Activated CD8-positive, alpha-beta T cell treated with anti-CD3 and anti-CD28 coated beads for 36 hours (primary cell): ENCODE measurements at regions of chr1 and their contacts with region 1.

Region 1: DNA sequence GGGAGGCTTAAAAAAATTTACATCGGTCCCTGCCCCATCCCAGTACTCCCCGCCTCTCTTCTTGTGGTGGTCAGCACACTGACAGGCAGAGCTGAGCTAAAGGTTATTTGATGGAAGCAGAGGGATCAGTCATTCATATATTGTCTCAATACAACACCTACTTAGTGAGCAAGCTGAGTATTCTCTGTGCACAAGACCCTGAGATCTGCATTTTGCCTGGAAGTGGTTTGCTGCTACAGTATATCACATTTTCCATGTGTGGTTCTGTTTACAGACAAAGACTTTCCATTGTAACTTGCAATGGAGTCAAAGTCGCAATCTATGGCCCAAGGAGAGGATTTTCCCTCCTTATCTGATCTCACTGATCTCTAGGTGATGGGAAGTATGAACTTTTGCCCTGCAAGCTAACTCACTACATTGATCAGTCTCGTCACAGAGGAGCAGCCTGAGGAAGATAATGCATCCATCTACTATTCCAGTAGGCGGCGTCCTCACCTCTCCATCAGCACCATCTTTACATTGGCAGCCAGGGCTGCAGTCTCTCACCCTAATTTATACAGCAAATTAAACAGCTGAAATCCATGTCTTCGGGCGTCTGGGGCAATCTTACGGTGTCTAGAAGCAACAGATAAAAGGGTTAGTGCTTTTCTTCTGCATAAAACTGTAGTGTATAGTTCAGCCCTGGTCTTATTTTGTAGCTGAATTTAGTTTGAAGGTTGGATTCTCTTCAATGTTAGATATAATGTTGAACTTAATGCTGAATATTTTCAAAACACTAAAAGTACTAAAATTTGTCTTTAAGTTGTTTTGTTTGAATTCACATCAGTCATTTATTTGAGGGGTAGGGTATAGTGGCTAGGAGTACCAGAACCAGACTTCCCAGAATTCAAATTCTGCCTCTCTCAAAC is 3.2 kb upstream of the TRAF5 start:
- DNase-seq: peak; percentile 86
- ATAC-seq: peak; percentile 77
- H3K4me3 Mint-ChIP-seq: no peak overlapping the region
- H3K27ac Mint-ChIP-seq: peak overlapping the region; percentile 58
- H3K4me1 Mint-ChIP-seq: peaks cover 61% of the 10 kb centered on the region
- H3K27me3 Mint-ChIP-seq: no peaks in the 10 kb centered on the region
- CTCF ChIP-seq: peak; percentile 81

Region 2: GRCh38 chr1:211258756-211259637 is 64.4 kb before region 1 on chr1 and contains the start of gene RCOR3:
- CTCF ChIA-PET with region 1: interaction called, 12 read pairs
- POLR2A ChIA-PET with region 1: interaction called, 7 read pairs
- intact Hi-C with region 1: no loop called
- DNase-seq: peak; percentile 94
- ATAC-seq: peak; percentile 83
- H3K4me3 Mint-ChIP-seq: peak within 1 kb of the TSS; percentile 86
- H3K27ac Mint-ChIP-seq: peak within 1 kb of the TSS; percentile 95
- H3K4me1 Mint-ChIP-seq: peaks cover 17% of the 10 kb centered on the region
- H3K27me3 Mint-ChIP-seq: no peaks in the 10 kb centered on the region
- CTCF ChIP-seq: peak; percentile 66
- total RNA-seq, gene RCOR3: 25.7 to 30.7 TPM

Region 3: DNA sequence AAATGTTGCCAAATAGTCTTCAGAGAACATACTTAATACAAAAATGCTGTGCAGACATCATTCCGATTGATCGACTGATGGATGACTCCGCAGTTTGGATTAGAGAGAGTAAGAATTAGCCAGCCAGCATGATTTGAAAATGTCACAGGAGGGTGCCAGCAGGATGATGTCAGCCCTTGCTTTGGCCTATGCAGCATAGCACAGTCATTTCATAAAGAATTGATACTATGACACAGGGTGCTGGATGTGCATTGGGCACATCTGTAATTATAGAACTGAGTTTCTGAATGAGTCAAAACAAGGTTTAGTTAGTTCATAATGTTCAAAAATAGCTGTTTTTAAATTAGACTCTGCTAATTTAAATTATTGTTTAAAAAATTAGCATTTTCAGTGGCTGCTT is 18.4 kb before region 1 on chr1:
- CTCF ChIA-PET with region 1: interaction called, 11 read pairs
- POLR2A ChIA-PET with region 1: interaction called, 3 read pairs
- intact Hi-C with region 1: loop called (anchors 2 kb)
- DNase-seq: peak; percentile 78
- ATAC-seq: peak; percentile 100
- H3K4me3 Mint-ChIP-seq: no peak overlapping the region
- H3K27ac Mint-ChIP-seq: peak overlapping the region; percentile 69
- H3K4me1 Mint-ChIP-seq: peaks cover 38% of the 10 kb centered on the region
- H3K27me3 Mint-ChIP-seq: no peaks in the 10 kb centered on the region
- CTCF ChIP-seq: no peak

Region 4: DNA sequence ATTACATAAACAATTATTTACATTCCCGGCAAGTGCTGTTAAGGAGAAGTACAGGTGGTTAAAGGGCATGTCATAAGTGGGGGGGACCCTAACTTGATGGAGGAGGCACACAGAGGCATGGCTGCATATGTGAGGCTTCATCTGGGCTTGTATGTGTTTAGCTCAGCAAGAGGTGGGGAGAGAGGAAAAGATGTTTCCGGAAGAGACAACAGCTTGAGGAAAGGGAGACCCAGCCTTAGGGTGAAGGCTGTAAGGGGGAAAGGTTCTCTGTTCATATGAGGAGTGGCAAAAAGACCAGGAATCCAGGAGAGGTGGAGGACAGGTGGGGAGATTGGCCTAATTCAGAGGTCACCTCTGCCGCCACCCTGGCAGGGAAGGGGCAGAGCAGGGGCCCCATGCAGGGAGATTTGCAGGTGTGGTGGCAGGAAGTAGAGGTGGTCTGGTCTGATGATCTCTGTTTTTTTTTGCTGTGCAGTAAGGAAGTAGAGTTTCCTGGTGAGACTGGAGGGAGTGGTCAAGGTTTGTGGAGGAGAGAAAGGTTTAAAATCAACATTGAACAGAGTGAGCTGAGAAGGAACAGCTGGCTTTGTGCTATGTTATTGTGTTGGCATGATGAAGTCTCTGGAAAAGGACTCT is 12.2 kb after region 1 on chr1:
- CTCF ChIA-PET with region 1: interaction called, 26 read pairs
- POLR2A ChIA-PET with region 1: interaction called, 45 read pairs
- intact Hi-C with region 1: no loop called
- DNase-seq: peak; percentile 43
- ATAC-seq: peak; percentile 60
- H3K4me3 Mint-ChIP-seq: peak overlapping the region; percentile 46
- H3K27ac Mint-ChIP-seq: peak overlapping the region; percentile 88
- H3K4me1 Mint-ChIP-seq: peaks cover 87% of the 10 kb centered on the region
- H3K27me3 Mint-ChIP-seq: no peaks in the 10 kb centered on the region
- CTCF ChIP-seq: no peak

Region 5: GRCh38 chr1:211382714-211383480 is 59.5 kb after region 1 on chr1:
- CTCF ChIA-PET with region 1: interaction called, 8 read pairs
- POLR2A ChIA-PET with region 1: no interaction called
- intact Hi-C with region 1: loop called (anchors 5 kb)
- DNase-seq: peak; percentile 85
- ATAC-seq: peak; percentile 81
- H3K4me3 Mint-ChIP-seq: peak overlapping the region; percentile 82
- H3K27ac Mint-ChIP-seq: peak overlapping the region; percentile 93
- H3K4me1 Mint-ChIP-seq: peaks cover 41% of the 10 kb centered on the region
- H3K27me3 Mint-ChIP-seq: no peaks in the 10 kb centered on the region
- CTCF ChIP-seq: no peak

Region 6: DNA sequence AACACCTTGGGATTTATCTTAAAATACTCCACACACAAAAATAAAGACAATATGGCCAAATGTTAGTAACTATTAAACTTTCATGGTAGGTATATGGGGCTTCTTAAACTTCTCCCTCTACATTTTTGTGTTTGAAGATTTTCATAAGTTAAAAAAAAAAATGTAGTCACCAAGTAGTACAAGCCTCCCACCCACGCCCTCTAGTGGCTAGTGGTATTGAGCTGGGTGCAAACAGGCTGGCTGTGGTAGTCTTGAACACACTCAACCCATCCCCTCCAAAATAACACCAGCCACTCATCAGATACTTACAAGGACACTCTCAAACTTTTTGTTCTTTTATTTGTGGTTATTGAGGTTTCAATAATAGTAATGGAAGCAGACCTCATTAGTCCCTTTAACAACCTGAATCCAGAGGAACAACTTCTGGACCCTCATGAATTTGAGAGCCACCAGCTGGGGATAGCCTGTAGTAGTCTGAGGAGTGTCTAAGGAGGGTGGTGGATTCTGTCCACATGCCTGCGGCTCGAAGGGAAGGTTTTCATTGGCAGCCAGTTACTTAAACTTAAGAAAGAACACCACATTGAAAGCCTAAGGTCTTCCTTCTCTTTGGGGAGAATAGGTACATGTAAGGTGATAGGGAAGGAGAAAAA is 152.9 kb after region 1 on chr1:
- CTCF ChIA-PET with region 1: interaction called, 25 read pairs
- POLR2A ChIA-PET with region 1: interaction called, 4 read pairs
- intact Hi-C with region 1: loop called (anchors 1 kb)
- DNase-seq: peak; percentile 90
- ATAC-seq: peak; percentile 87
- H3K4me3 Mint-ChIP-seq: no peak overlapping the region
- H3K27ac Mint-ChIP-seq: no peak overlapping the region
- H3K4me1 Mint-ChIP-seq: no peaks in the 10 kb centered on the region
- H3K27me3 Mint-ChIP-seq: peaks cover 15% of the 10 kb centered on the region
- CTCF ChIP-seq: peak; percentile 79

Region 7: DNA sequence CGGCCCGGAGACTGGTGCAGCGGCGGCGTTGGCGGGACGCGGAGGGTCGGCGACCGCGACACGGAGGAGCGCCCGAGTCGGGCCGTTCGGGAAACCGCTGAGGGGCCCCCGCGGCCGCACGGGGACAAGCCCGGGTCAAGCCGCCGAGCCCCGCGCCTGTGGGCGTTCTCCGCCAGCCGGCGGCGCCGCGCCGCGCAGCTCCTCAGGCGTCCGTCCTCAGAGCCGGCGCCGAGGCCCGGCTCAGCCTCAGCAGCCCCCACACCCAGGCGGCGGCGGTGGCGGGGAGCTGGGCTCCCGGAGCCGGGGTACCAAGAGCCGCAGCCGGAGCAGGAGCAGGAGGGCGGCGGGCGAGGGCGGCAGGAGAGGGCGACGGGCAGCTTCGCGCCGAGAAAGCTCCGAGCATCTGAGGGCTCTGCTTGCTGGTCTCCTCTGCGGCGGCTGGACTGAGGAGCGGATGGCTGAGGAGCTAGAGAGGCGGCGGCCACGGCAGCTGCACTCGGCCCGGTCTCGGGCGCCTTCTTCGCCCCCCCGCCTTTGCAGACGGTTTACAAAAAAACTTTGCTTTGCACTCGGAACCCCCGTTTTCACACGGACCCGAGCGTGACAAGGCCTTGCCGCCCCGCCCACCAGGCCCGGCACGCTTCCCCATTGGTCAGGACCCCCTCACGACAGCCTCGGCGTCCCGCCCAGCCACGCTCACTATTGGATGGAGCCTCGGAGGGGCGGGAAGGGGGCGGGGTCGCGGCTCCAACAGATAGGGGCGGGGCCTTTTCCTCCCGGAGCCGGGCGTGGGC is 255.4 kb after region 1 on chr1 and contains the start of gene SLC30A1:
- CTCF ChIA-PET with region 1: interaction called, 4 read pairs
- POLR2A ChIA-PET with region 1: no interaction called
- intact Hi-C with region 1: loop called (anchors 2 kb)
- DNase-seq: peak; percentile 100
- ATAC-seq: peak; percentile 94
- H3K4me3 Mint-ChIP-seq: peak within 1 kb of the TSS; percentile 96
- H3K27ac Mint-ChIP-seq: peak within 1 kb of the TSS; percentile 92
- H3K4me1 Mint-ChIP-seq: peaks cover 29% of the 10 kb centered on the region
- H3K27me3 Mint-ChIP-seq: no peaks in the 10 kb centered on the region
- CTCF ChIP-seq: no peak
- total RNA-seq, gene SLC30A1: 6.2 to 7.2 TPM